SK-N-SH (cell line): ENCODE measurements at regions of chr3 and their contacts with region 1.

Region 1: GRCh38 chr3:194315088-194315964 is 35.8 kb downstream of the CPN2 start:
- DNase-seq: peak; percentile 94
- H3K4me3 ChIP-seq: peak overlapping the region; percentile 44 to 69
- H3K27ac ChIP-seq: peak overlapping the region in 1 of 2 experiments; percentile 24; a peak in 2 of 4 replicates
- H3K4me1 ChIP-seq: peaks cover 0 to 28% of the 10 kb centered on the region in 2 experiments; a peak in 1 of 4 replicates
- H3K27me3 ChIP-seq: peaks cover 26% of the 10 kb centered on the region
- CTCF ChIP-seq: peak; percentile 86
- EP300 ChIP-seq: no peak
- RAD21 ChIP-seq: peak; percentile 96

Region 2: DNA sequence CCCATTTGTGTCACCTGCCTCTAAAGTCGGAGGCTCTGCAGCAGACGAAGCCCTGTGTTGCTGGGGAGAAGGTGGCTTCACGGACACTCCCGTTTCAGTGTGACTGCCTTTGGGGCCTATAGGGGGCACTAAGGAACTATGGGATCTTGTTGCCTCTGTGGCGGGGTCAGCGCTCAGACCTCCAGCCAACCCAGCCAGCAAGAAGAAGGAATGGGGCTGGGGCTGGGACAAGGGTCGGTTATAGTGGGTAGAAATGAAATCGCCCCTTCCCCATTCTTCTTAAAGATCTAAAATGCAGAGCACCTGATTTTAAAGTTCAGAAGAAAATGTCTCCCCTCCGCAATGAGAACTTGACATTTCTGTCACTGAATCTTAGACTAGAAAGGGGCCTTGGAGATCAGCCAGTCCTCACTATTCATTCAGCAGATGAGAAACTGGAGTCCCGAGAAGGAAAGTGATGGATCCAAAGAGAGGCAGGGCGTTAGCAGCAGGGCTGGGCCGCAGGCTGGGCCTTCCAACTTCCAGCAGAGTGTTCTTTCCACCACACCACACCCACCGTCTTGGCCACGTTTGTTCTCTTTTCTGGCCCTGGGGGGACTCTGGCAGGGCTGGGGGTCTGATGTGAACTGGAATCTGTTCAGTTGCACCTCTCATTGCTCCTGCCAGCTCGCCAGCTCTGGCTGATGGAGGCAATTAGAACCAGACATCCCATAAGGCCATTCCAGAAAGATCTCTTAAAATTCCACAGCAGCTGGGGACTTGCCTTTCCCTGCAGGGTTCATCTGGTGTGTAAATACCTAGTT is 526.9 kb before region 1 on chr3:
- CTCF ChIA-PET with region 1: interaction called, 246 read pairs
- POLR2A ChIA-PET with region 1: interaction called, 3 read pairs
- DNase-seq: peak; percentile 75
- H3K4me3 ChIP-seq: peak overlapping the region in 1 of 2 experiments; percentile 27; a peak in 1 of 4 replicates
- H3K27ac ChIP-seq: peak overlapping the region in 1 of 2 experiments; percentile 55; a peak in 2 of 4 replicates
- H3K4me1 ChIP-seq: peaks cover 2 to 27% of the 10 kb centered on the region in 2 experiments; a peak in 3 of 4 replicates
- H3K27me3 ChIP-seq: no peaks in the 10 kb centered on the region
- CTCF ChIP-seq: peak; percentile 51
- EP300 ChIP-seq: peak in 1 of 2 experiments; percentile 85; a peak in 2 of 4 replicates
- RAD21 ChIP-seq: peak; percentile 74

Region 3: DNA sequence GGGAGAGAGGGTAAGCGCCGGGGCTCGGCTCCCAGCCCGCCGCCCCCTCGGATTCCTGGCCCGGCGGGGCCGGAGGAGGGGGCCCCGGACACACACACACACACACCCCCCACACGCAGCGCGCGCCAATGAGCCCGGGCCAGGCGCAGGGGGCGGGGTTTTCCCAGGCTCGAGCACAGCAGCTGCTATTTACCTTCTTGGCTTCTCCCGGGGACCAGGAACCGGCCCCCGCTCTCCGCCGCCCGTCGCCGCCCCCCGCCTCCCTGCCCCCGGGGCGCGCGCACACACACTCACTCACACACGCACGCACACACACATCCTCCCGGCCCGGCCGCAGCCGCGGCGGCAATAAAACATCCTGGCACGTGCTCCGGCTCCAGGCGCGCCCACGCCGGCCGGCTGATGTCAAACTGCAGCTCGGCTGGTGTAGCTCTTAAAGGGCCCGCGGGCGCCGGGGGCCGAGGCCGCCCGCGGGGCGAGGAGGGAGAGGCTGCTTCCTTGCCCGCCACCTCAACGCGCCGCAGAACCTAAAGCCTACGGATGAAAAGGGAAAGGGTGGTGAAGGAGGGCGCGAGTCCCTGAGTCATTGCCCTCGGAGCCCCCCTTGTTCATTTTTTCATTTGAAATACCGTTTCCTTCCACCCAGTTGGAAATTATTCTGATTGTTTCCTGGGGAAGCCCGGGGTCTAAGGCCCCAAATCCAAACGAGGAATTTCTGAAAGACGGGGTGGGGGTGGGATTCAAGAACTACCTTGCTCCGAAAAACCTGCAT is 180.4 kb before region 1 on chr3:
- CTCF ChIA-PET with region 1: interaction called, 94 read pairs
- POLR2A ChIA-PET with region 1: interaction called, 8 read pairs
- DNase-seq: peak; percentile 93
- H3K4me3 ChIP-seq: peak overlapping the region; percentile 68 to 71
- H3K27ac ChIP-seq: peak overlapping the region; percentile 94 to 96
- H3K4me1 ChIP-seq: peaks cover 23 to 63% of the 10 kb centered on the region in 2 experiments; a peak in 3 of 4 replicates
- H3K27me3 ChIP-seq: no peaks in the 10 kb centered on the region
- CTCF ChIP-seq: no peak
- EP300 ChIP-seq: peak; percentile 53 to 55; a peak in 2 of 4 replicates
- RAD21 ChIP-seq: peak; percentile 11; the same call in 1 of the 2 replicates

Region 4: DNA sequence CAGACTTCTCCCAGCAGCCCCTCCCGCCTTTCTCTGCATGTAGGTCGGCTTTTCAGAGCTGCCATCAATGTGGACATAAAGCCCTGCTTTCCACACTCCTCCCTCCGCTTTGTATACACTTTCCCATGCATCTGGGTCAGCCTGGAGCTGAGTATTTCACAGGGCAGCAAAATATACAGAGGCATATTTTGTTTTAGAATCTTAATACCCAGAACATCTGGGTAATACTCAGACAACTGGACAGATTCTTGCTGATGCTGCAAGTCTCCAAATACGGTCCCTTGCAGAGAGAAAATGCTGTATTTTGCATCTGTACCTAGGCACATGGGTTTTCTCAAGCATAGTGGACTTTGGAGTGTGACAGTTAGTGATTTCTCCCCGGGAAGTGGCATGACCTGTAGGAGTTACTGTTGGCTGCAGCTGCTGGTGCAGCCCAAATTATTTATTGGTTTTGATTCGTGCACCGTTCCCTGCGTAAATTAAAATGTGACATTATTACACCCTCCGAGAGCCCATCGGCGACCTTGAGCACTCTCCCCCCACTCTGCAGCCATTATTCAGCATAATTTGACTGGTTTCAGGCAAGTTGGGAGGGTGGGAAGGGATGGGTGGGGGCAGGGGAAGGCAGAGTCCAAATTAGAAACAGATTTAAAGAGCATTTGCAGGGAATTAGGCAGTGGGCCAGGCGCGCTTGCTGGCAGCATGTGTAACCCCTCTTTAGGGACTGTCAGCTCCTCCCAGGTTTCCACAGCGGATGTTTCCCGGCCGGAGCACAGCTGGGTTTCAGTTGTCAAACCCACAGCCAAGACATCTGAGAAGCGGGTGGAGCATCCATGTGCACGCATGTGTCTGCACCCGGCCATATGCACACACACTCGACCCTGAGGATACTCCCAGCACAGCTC is 65.0 kb before region 1 on chr3:
- CTCF ChIA-PET with region 1: interaction called, 21 read pairs
- POLR2A ChIA-PET with region 1: no interaction called
- DNase-seq: peak; percentile 84
- H3K4me3 ChIP-seq: no peak overlapping the region
- H3K27ac ChIP-seq: peak overlapping the region in 1 of 2 experiments; percentile 95; a peak in 3 of 4 replicates
- H3K4me1 ChIP-seq: peaks cover 0 to 59% of the 10 kb centered on the region in 2 experiments; a peak in 3 of 4 replicates
- H3K27me3 ChIP-seq: peaks cover 20% of the 10 kb centered on the region
- CTCF ChIP-seq: no peak
- EP300 ChIP-seq: no peak; a peak in 1 of 4 replicates
- RAD21 ChIP-seq: no peak

Region 5: DNA sequence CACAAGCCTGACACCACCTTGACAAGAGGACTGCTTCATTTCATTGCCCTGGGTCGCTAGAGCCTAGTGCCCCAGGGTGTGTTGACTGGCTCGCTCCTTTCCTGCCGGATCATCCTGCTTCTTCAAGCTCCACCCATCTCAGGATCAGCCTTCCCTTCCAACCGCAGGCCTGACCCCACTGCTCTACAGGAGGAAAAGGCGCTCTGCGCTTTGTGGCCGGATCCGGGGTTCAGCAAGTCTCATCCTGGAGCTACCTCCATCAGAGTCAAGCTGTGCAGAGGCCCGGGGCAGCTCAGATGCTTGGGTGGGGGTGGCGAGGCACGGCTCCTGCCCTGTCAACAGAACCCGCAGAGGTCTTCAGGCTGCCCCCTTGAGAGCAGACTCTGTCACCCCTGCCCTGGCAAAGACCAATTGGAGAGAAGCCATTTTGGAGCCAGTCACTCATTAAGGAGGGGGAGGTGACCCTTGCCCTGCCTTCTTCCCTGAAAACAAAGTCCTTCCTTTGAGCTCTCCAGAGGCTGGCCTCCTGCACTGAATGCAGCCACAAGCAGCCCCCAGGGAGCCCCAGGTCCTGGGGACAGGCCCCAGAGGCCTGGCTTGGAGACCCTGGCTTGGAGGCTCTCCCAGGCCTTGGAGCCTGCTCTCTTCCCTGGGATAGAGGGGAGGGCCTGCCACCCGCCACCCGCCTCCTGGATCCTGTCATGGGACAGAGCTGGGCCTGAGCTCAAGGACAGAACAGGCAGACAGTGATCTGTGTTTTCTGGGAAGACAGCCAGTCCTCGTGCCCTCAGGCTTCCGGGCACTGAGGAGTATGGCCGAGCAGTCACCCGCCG is 44.5 kb before region 1 on chr3:
- CTCF ChIA-PET with region 1: interaction called, 48 read pairs
- POLR2A ChIA-PET with region 1: interaction called, 13 read pairs
- DNase-seq: peak; percentile 93
- H3K4me3 ChIP-seq: no peak overlapping the region
- H3K27ac ChIP-seq: peak overlapping the region; percentile 48 to 99
- H3K4me1 ChIP-seq: peaks cover 6 to 72% of the 10 kb centered on the region in 2 experiments; a peak in 3 of 4 replicates
- H3K27me3 ChIP-seq: no peaks in the 10 kb centered on the region
- CTCF ChIP-seq: no peak
- EP300 ChIP-seq: peak in 1 of 2 experiments; percentile 98; a peak in 2 of 4 replicates
- RAD21 ChIP-seq: peak; percentile 42; the same call in 1 of the 2 replicates

Region 6: GRCh38 chr3:194481103-194481502 is 165.8 kb after region 1 on chr3:
- CTCF ChIA-PET with region 1: no interaction called
- POLR2A ChIA-PET with region 1: no interaction called
- DNase-seq: no peak
- H3K4me3 ChIP-seq: 0 out of 4 replicates have a peak overlapping the region, but pooled peaks of 1 of the 2 experiments have one; percentile 8
- H3K27ac ChIP-seq: peak overlapping the region in 1 of 2 experiments; percentile 79; a peak in 2 of 4 replicates
- H3K4me1 ChIP-seq: peaks cover 0 to 43% of the 10 kb centered on the region in 2 experiments
- H3K27me3 ChIP-seq: no peaks in the 10 kb centered on the region
- CTCF ChIP-seq: no peak
- EP300 ChIP-seq: no peak
- RAD21 ChIP-seq: no peak